CD4-positive, alpha-beta memory T cell (primary cell): ENCODE measurements at regions of chr11 and their contacts with region 1.

Region 1: GRCh38 chr11:61899146-61899841 is 7.9 kb upstream of the FADS3 start:
- DNase-seq: peak; percentile 89 to 92 (median 90)
- H3K4me3 ChIP-seq: no peak overlapping the region
- H3K4me3 Mint-ChIP-seq: peak overlapping the region in 1 of 8 donors; percentile 4
- H3K27ac ChIP-seq: no peak overlapping the region
- H3K27ac Mint-ChIP-seq: peak overlapping the region in 6 of 7 donors; percentile 2 to 93 (median 76)
- H3K4me1 ChIP-seq: peaks cover 7% of the 10 kb centered on the region
- H3K4me1 Mint-ChIP-seq: peaks cover 4 to 6% (median 5%) of the 10 kb centered on the region in 4 donors
- H3K27me3 ChIP-seq: no peaks in the 10 kb centered on the region
- H3K27me3 Mint-ChIP-seq: no peaks in the 10 kb centered on the region

Region 2: GRCh38 chr11:61679893-61680621 is 219.2 kb before region 1 on chr11 and contains the start of gene DAGLA:
- CTCF ChIA-PET with region 1: no interaction called
- POLR2A ChIA-PET with region 1: no interaction called
- intact Hi-C with region 1: no loop called
- DNase-seq: peak; percentile 71 to 82 (median 72)
- H3K4me3 ChIP-seq: peak within 1 kb of the TSS in 1 of 2 donors; percentile 19
- H3K4me3 Mint-ChIP-seq: peak within 1 kb of the TSS; percentile 69 to 83 (median 75)
- H3K27ac ChIP-seq: no peak within 1 kb of the TSS
- H3K27ac Mint-ChIP-seq: peak within 1 kb of the TSS in 6 of 7 donors; percentile 28 to 91 (median 52)
- H3K4me1 ChIP-seq: peaks cover 22% of the 10 kb centered on the region
- H3K4me1 Mint-ChIP-seq: peaks cover 0 to 14% (median 6%) of the 10 kb centered on the region in 4 donors
- H3K27me3 ChIP-seq: no peaks in the 10 kb centered on the region
- H3K27me3 Mint-ChIP-seq: peaks cover 4 to 16% of the 10 kb centered on the region in 2 donors
- total RNA-seq, gene DAGLA: 0.30 to 0.44 TPM

Region 3: GRCh38 chr11:61816736-61817455 is 82.4 kb before region 1 on chr11 and contains the start of gene FADS1:
- CTCF ChIA-PET with region 1: interaction called, 10 read pairs
- POLR2A ChIA-PET with region 1: no interaction called
- intact Hi-C with region 1: loop called (anchors 5 kb)
- DNase-seq: peak; percentile 54 to 79 (median 68)
- H3K4me3 ChIP-seq: peak within 1 kb of the TSS; percentile 73 to 77
- H3K4me3 Mint-ChIP-seq: peak within 1 kb of the TSS; percentile 84 to 97 (median 92)
- H3K27ac ChIP-seq: peak within 1 kb of the TSS; percentile 34
- H3K27ac Mint-ChIP-seq: peak within 1 kb of the TSS; percentile 5 to 96 (median 83)
- H3K4me1 ChIP-seq: peaks cover 21% of the 10 kb centered on the region
- H3K4me1 Mint-ChIP-seq: peaks cover 3 to 18% (median 7%) of the 10 kb centered on the region in 4 donors
- H3K27me3 ChIP-seq: peaks cover 10% of the 10 kb centered on the region
- H3K27me3 Mint-ChIP-seq: peaks cover 4 to 19% of the 10 kb centered on the region in 2 donors
- total RNA-seq, gene FADS1: 1.7 to 2.2 TPM

Region 4: GRCh38 chr11:61928606-61929005 is 29.3 kb after region 1 on chr11:
- CTCF ChIA-PET with region 1: interaction called, 16 read pairs
- POLR2A ChIA-PET with region 1: no interaction called
- intact Hi-C with region 1: no loop called
- DNase-seq: no peak
- H3K4me3 ChIP-seq: no peak overlapping the region
- H3K4me3 Mint-ChIP-seq: no peak overlapping the region
- H3K27ac ChIP-seq: no peak overlapping the region
- H3K27ac Mint-ChIP-seq: peak overlapping the region in 1 of 7 donors; percentile 10
- H3K4me1 ChIP-seq: no peaks in the 10 kb centered on the region
- H3K4me1 Mint-ChIP-seq: no peaks in the 10 kb centered on the region
- H3K27me3 ChIP-seq: no peaks in the 10 kb centered on the region
- H3K27me3 Mint-ChIP-seq: peaks cover 9 to 16% of the 10 kb centered on the region in 2 donors

Region 5: DNA sequence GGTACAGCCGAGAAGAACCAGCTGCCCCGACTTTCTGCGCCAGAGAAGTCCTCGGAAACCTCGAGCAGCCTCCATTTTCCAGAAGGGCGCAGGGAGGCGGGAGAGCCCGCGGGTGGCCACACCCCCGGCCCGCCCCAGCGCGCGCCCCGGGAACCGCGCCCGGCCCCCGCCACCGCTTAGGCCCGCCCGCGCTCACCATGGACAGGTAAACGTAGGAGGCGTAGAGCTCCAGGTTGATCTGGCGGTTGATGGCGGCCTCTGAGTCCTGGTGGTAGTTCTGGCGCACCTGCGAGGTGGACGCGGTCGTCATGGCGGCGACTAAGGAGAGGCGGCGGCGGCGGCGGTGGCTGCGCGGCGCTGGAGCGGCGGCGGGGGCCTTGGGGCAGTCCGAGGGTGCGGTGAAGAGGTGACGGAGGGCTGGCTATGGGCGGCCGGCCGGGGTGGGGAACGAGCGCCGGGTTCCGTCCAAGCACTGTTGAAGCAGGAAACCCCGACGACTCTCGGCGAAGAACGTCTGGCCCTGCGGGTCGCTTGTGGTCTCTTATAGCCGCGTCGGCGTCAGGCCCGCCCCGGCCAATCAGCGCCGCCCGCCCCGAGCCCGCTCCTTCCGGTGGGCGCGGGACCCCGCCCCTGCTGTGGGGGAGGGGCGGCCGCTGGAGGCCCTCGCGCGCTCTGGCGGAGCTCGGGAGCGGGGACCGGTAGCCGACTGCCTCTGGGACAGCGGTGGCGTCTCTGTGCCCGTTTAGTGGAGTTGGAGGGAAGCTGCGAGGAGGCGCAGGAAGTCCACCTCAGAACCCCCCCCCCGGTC is 68.0 kb after region 1 on chr11 and contains the start of gene FTH1:
- CTCF ChIA-PET with region 1: interaction called, 3 read pairs
- POLR2A ChIA-PET with region 1: interaction called, 20 read pairs
- intact Hi-C with region 1: loop called (anchors 5 kb)
- DNase-seq: peak; percentile 91 to 95 (median 92)
- H3K4me3 ChIP-seq: peak within 1 kb of the TSS; percentile 99 to 100
- H3K4me3 Mint-ChIP-seq: peak within 1 kb of the TSS; percentile 92 to 97 (median 95)
- H3K27ac ChIP-seq: peak within 1 kb of the TSS; percentile 89
- H3K27ac Mint-ChIP-seq: peak within 1 kb of the TSS; percentile 90 to 99 (median 98)
- H3K4me1 ChIP-seq: peaks cover 38% of the 10 kb centered on the region
- H3K4me1 Mint-ChIP-seq: peaks cover 36 to 74% (median 50%) of the 10 kb centered on the region in 4 donors
- H3K27me3 ChIP-seq: no peaks in the 10 kb centered on the region
- H3K27me3 Mint-ChIP-seq: no peaks in the 10 kb centered on the region
- total RNA-seq, gene FTH1: 695 to 763 TPM

Region 6: DNA sequence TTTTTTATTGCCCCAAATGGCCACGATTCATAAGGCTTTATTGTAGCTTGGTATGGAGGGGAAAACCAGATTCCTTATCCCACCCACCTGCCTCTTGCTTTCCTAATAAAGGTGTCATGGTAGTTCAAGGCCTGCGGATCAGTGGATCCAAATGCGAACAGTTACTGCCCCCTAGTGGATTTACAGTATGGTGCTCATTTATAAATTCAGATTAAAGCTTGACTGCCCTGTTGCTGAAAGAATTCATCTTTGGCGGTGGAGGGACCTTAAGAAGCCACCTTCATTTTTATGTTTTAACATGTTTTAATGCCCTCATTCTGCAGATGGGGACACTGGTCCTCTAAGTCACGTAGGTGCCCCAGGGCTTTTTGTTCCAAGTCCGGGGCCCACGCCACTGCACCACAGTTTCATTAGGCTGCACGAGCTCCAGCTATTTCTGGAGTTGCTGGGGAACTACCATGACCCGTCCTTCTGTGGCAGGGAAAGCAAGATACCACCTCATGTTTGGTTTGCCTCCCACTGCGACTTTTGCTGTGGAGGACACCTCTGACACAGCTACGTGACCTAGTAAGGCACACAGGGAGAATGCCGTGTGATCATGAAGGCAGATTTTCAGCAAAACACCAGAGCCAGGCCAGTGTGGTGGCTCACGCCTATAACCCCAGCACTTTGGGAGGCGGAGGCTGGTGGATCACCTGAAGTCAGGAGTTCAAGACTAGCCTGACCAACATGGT is 208.9 kb after region 1 on chr11:
- CTCF ChIA-PET with region 1: interaction called, 105 read pairs
- POLR2A ChIA-PET with region 1: interaction called, 9 read pairs
- intact Hi-C with region 1: loop called (anchors 1 kb)
- DNase-seq: peak; percentile 55 to 71 (median 66)
- H3K4me3 ChIP-seq: no peak overlapping the region
- H3K4me3 Mint-ChIP-seq: peak overlapping the region in 2 of 8 donors; percentile 36 to 39
- H3K27ac ChIP-seq: no peak overlapping the region
- H3K27ac Mint-ChIP-seq: peak overlapping the region in 2 of 7 donors; percentile 60 to 68
- H3K4me1 ChIP-seq: peaks cover 13% of the 10 kb centered on the region
- H3K4me1 Mint-ChIP-seq: peaks cover 9 to 19% (median 13%) of the 10 kb centered on the region in 4 donors
- H3K27me3 ChIP-seq: no peaks in the 10 kb centered on the region
- H3K27me3 Mint-ChIP-seq: no peaks in the 10 kb centered on the region